ENCODE measurements at regions of chr2 and their contacts with region 1.

Region 1: DNA sequence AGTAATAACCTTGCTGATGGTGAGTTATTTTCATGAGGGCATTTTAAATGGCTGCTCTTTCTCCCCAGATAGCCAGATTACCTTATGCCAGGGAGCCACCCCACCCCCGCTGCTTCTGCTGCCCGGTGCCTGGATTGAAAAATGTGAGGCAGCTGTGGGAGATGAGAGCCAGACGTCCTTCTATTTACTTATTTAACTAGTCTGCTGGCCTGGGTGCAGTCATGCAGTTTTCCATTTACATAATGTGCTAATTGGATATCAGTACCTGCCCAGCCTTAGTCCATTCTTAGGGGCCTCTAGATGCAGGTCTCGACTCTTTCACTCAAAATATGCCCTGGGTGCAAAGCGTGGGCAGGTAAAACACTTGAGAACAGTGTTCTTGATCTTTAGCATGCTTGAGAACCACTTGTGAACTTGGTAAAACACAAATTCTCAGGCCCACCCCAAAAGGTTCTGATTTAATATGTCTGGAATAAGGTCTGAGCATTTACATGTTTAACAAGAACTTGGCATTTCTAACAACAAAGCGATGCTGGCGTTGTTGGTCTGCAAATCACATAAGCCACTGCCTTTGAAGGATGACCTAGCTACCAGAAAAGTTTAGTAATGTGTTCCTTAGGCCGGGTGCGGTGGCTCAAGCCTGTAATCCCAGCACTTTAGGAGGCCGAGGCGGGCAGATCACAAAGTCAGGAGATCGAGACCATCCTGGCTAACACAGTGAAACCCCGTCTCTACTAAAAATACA is 154.3 kb downstream of the NRP2 start:
- DNase-seq: peak; percentile 92
- H3K4me3 ChIP-seq: no peak overlapping the region
- H3K27ac ChIP-seq: peak overlapping the region; percentile 78 to 83 (median 82)
- H3K4me1 ChIP-seq: peaks cover 0 to 49% (median 34%) of the 10 kb centered on the region in 4 donors
- H3K27me3 ChIP-seq: no peaks in the 10 kb centered on the region
- CTCF ChIP-seq: no peak
- EP300 ChIP-seq: peak; percentile 21 to 87 (median 58)
- POLR2A ChIP-seq: no peak

Region 2: GRCh38 chr2:205792908-205793307 is 43.7 kb before region 1 on chr2:
- intact Hi-C with region 1: loop called (anchors 1 kb)
- DNase-seq: peak; percentile 87
- H3K4me3 ChIP-seq: no peak overlapping the region
- H3K27ac ChIP-seq: peak overlapping the region; percentile 83 to 99 (median 90)
- H3K4me1 ChIP-seq: peaks cover 0 to 81% (median 65%) of the 10 kb centered on the region in 4 donors
- H3K27me3 ChIP-seq: no peaks in the 10 kb centered on the region
- CTCF ChIP-seq: no peak
- EP300 ChIP-seq: peak; percentile 71 to 89 (median 85)
- POLR2A ChIP-seq: no peak

Region 3: DNA sequence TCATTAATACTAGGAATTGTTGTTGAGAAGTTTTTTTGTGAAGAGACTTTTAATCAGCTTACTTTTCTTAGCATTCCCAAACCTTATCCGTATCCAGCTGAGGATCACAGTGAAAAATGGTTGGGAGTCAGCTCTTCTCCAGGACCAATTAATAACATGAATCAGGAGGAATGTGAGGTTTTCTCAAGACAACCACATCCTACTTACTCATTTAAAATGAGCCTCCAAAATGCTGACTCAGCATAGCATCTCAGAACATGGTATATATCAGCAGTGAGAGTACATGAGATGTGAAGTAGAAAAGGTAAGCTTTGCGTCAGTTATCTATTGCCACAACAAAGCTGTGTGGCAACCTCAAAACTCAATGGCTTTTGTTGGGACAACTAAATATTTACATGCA is 14.1 kb before region 1 on chr2:
- intact Hi-C with region 1: no loop called
- DNase-seq: no peak
- H3K4me3 ChIP-seq: no peak overlapping the region
- H3K27ac ChIP-seq: no peak overlapping the region
- H3K4me1 ChIP-seq: peaks cover 0 to 9% (median 3%) of the 10 kb centered on the region in 4 donors
- H3K27me3 ChIP-seq: no peaks in the 10 kb centered on the region
- CTCF ChIP-seq: no peak
- EP300 ChIP-seq: no peak
- POLR2A ChIP-seq: no peak

Region 4: DNA sequence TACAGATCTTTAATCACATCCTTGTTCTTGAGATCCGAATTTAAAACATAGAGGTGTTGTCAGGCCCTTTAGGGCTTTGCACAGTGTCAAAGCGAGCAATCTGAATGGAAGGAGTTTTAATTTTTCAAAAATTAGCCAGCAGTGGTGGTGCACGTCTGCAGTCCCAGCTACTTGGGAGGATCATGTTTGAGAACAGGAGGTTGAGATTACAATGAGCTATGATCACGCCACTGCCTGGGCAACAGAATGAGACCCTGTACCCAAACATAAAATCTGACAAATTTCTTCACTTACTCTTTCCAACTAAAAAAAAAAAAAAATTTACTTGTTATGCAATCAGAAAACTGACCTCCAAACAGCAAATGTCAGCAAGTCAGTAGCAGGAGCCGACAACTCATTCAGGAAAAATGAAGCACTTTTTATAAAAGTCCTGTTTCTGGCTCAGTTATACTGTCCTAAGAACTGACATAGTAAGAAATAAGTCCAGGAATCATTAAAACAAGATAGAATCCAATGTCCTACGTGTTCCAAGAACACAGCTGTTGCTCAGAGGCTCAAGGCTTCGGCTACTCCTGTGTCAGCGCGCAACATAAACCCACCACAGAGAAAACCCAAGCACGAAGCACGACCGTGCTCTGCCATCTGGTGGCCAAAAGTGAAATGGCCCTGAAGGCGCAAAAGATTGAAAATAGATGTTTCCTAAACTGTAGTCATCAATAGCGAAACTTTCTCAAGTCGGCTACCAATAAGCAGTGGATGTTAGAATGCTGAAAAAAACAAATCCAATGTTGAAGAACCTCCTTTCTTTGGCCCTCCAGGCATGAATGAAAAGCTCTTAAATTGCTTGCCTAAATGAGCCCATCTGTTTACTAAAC is 111.2 kb after region 1 on chr2:
- intact Hi-C with region 1: no loop called
- DNase-seq: peak; percentile 91
- H3K4me3 ChIP-seq: no peak overlapping the region
- H3K27ac ChIP-seq: peak overlapping the region in 3 of 4 donors; percentile 15 to 32 (median 30)
- H3K4me1 ChIP-seq: peaks cover 0 to 10% (median 4%) of the 10 kb centered on the region in 4 donors
- H3K27me3 ChIP-seq: no peaks in the 10 kb centered on the region
- CTCF ChIP-seq: peak; percentile 86 to 91 (median 88)
- EP300 ChIP-seq: no peak
- POLR2A ChIP-seq: no peak